Activated CD4-positive, alpha-beta memory T cell treated with anti-CD3 and anti-CD28 coated beads for 36 hours (primary cell): ENCODE measurements at regions of chr3 and their contacts with region 1.

Region 1: DNA sequence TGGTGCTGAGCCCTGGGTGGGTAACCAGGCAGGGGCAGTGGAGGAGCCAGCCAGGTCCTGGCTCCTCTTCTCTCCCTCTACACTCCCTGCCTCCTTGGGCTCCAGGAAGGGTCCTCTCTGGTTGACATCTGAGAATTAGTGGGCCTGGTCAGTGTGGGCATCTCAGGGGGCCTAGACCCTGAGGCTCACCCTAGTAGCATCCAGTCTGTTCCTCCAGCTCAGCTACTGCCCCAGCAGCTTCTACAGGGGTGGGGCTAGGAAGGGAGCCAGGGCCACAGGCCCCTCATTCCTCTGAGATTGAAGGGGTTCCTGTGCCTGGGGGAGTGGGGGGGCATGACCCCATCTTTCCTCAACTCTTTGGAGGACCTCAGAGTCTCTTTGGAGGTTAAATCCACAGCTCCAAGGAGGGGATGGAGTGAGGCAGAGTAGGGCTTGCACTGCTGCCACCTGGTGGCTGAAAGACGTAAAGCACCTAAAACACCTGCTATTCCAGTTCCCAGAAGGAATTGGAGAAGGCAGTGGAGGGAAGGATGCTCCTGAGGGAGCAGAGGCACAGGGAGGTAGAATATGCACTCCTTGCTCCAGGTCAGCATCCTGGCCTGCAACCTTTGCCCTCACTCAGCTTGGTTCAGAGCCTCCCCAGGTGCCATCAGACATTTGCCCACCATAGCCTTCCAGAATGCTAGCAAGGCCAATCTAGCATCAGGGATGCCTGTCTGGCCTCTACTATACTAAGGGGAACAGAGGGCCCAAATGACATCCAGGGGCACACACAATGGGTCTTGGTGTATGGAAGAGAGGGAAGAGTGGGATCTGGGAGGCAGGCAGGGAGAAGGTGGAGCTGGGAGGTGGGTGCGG is 25.1 kb downstream of the C3orf18 start:
- DNase-seq: peak; percentile 72
- H3K4me3 Mint-ChIP-seq: no peak overlapping the region
- H3K27ac Mint-ChIP-seq: no peak overlapping the region
- H3K4me1 Mint-ChIP-seq: no peaks in the 10 kb centered on the region
- H3K27me3 Mint-ChIP-seq: no peaks in the 10 kb centered on the region

Region 2: GRCh38 chr3:50365080-50365841 is 177.1 kb before region 1 on chr3:
- CTCF ChIA-PET with region 1: interaction called, 11 read pairs
- POLR2A ChIA-PET with region 1: no interaction called
- intact Hi-C with region 1: loop called (anchors 5 kb)
- DNase-seq: peak; percentile 97
- H3K4me3 Mint-ChIP-seq: peak overlapping the region; percentile 75
- H3K27ac Mint-ChIP-seq: peak overlapping the region; percentile 51
- H3K4me1 Mint-ChIP-seq: peaks cover 20% of the 10 kb centered on the region
- H3K27me3 Mint-ChIP-seq: no peaks in the 10 kb centered on the region

Region 3: DNA sequence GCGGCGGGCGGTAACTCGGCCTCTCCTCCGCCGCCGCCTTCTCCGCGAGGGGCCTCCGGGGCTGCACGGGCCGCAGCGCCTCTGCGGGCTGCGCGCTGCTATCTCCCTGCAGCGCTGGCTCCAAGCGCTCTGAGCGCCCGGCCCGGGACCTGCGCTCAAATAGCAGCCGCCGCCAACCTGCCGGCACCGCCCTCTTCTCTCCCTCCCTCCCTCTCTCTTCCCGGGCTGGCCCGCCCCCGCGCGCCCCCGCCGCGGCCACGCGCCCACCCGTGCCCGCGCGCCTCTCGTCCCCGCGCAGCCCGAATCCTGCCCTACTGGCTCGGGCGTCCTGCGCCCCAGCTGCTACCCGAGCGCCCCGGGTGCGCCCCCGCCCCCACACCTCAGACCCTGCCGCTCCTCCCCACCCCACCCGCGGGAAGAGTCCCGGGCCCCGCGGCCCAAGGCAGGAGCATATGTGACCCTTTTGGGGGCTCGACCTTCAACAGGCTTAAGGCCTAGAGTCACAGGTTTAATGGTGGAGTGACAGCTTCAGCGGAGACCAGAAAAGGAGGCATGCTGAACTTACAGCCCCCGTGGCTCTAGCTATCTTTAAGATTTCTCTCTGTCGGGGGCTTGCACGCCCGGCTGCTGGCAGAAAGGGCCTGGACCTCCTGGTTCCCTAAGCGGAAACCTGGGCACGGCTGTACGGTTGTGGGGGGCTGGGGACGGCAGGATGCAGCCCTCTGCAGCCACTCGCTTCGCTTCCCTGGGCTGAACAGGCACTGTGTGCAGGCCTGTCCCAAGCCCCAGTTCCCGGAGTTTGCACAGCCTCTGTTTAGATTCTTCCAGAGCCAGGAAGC is 38.7 kb before region 1 on chr3 and contains the start of gene CACNA2D2:
- CTCF ChIA-PET with region 1: interaction called, 11 read pairs
- POLR2A ChIA-PET with region 1: no interaction called
- intact Hi-C with region 1: no loop called
- DNase-seq: peak; percentile 60
- H3K4me3 Mint-ChIP-seq: peak within 1 kb of the TSS; percentile 48
- H3K27ac Mint-ChIP-seq: no peak within 1 kb of the TSS
- H3K4me1 Mint-ChIP-seq: peaks cover 9% of the 10 kb centered on the region
- H3K27me3 Mint-ChIP-seq: peaks cover 23% of the 10 kb centered on the region
- total RNA-seq, gene CACNA2D2: 0.63 to 0.69 TPM

Region 4: GRCh38 chr3:50519471-50520089 is 22.8 kb before region 1 on chr3:
- CTCF ChIA-PET with region 1: interaction called, 28 read pairs
- POLR2A ChIA-PET with region 1: no interaction called
- intact Hi-C with region 1: loop called (anchors 1 kb)
- DNase-seq: peak; percentile 86
- H3K4me3 Mint-ChIP-seq: no peak overlapping the region
- H3K27ac Mint-ChIP-seq: no peak overlapping the region
- H3K4me1 Mint-ChIP-seq: no peaks in the 10 kb centered on the region
- H3K27me3 Mint-ChIP-seq: no peaks in the 10 kb centered on the region